T-cell (primary cell): ENCODE measurements at regions of chr1 and their contacts with region 1.

Region 1: DNA sequence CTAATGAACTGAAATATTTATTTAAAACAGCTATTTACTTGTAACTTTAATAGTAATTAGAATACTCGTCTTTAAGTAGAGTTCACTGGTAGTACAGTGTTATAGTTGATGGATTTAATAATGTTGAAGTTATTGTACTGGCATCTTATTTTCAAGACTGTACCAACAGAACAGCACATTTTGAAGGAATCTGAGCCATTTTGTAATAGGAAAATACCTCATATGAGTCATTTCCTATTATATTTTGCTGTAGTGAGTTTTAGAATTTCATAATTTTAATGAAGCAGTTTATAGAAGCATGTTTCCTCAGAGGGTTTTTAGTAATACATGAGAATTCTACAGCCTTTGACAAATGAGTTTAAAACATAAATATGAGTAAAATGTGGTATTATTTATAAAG is 258.3 kb downstream of the OLFM3 start:
- DNase-seq: no peak
- ATAC-seq: no peak
- H3K4me3 ChIP-seq: no peak overlapping the region
- H3K4me3 Mint-ChIP-seq: no peak overlapping the region
- H3K27ac ChIP-seq: no peak overlapping the region
- H3K27ac Mint-ChIP-seq: no peak overlapping the region
- H3K4me1 ChIP-seq: no peaks in the 10 kb centered on the region
- H3K4me1 Mint-ChIP-seq: no peaks in the 10 kb centered on the region
- H3K27me3 ChIP-seq: no peaks in the 10 kb centered on the region
- H3K27me3 Mint-ChIP-seq: peaks cover 0 to 6% of the 10 kb centered on the region in 2 donors

Region 2: DNA sequence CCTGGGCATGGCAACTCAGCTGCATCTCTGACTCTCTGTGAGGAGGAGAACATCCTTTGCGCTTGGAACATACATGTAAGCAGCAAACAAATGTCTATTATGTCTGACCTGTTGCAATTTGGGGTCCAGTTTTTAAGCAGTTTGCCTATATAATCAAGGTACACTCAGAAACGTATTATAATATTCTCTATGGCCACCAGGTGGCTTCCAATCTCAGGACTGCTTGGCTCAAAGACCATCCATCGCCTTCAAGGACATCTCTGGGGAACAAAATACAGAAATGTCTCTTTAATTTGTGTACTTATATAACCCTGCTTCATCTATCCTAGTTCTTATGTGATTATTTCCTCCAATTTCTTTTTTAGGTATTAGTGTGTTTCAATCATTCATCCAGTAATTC is 31.0 kb after region 1 on chr1:
- CTCF ChIA-PET with region 1: interaction called in 1 of 2 experiments, 17 read pairs
- POLR2A ChIA-PET with region 1: no interaction called
- DNase-seq: peak in 1 of 35 experiments; percentile 2
- ATAC-seq: no peak
- H3K4me3 ChIP-seq: no peak overlapping the region
- H3K4me3 Mint-ChIP-seq: no peak overlapping the region
- H3K27ac ChIP-seq: no peak overlapping the region
- H3K27ac Mint-ChIP-seq: no peak overlapping the region
- H3K4me1 ChIP-seq: no peaks in the 10 kb centered on the region
- H3K4me1 Mint-ChIP-seq: no peaks in the 10 kb centered on the region
- H3K27me3 ChIP-seq: no peaks in the 10 kb centered on the region
- H3K27me3 Mint-ChIP-seq: peaks cover 0 to 15% of the 10 kb centered on the region in 2 donors